Activated B cell treated with CpG ODN at 0.5 μM for 24 hours (primary cell): ENCODE measurements at regions of chrX and their contacts with region 1.

Region 1: DNA sequence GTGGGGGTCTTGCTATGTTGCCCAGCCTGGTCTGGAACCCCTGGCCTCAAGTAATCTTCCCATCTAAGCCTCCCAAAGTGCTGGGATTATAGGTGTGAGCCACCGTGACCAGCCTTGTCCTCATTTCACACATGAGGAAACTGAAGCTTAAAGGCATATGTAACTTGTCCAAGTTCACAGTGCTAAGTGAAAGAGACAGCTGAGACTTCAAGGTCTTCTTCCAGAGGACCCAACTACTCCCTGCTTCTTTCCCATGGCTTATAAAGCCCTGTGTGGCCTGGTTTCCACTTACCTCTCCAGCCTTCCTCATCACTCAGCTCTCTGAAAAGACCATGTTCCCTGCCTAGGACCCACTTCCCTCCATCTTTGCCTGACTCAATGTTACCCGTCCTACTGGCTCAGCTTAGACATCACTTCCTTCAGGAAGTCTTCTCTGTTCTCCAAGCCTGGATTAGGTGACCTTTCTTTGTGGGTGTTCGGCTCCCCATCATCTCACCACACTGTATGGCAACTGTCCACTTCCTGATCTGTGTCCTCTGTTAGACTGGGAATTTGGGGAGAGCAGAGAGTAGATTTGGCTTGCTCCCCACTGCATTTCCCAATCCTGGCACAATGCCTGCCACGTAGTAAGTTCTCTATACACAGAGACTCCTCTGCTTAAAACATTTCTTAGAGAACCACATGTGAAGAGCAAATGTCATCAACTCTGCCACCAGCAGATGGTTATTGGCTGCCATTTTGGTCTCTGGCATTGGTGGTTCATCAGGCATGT is 30.4 kb upstream of the LAMP2 start:
- DNase-seq: no peak
- ATAC-seq: no peak
- H3K4me3 Mint-ChIP-seq: no peak overlapping the region
- H3K27ac Mint-ChIP-seq: no peak overlapping the region
- H3K4me1 Mint-ChIP-seq: peaks cover 3% of the 10 kb centered on the region
- H3K27me3 Mint-ChIP-seq: no peaks in the 10 kb centered on the region
- CTCF ChIP-seq: no peak

Region 2: GRCh38 chrX:120664081-120664480 is 164.6 kb after region 1 on chrX:
- CTCF ChIA-PET with region 1: interaction called, 4 read pairs
- POLR2A ChIA-PET with region 1: no interaction called
- intact Hi-C with region 1: loop called (anchors 1 kb)
- DNase-seq: no peak
- ATAC-seq: no peak
- H3K4me3 Mint-ChIP-seq: no peak overlapping the region
- H3K27ac Mint-ChIP-seq: no peak overlapping the region
- H3K4me1 Mint-ChIP-seq: peaks cover 4% of the 10 kb centered on the region
- H3K27me3 Mint-ChIP-seq: no peaks in the 10 kb centered on the region
- CTCF ChIP-seq: no peak